Activated CD8-positive, alpha-beta T cell treated with anti-CD3 and anti-CD28 coated beads for 36 hours (primary cell): ENCODE measurements at regions of chr18 and their contacts with region 1.

Region 1: DNA sequence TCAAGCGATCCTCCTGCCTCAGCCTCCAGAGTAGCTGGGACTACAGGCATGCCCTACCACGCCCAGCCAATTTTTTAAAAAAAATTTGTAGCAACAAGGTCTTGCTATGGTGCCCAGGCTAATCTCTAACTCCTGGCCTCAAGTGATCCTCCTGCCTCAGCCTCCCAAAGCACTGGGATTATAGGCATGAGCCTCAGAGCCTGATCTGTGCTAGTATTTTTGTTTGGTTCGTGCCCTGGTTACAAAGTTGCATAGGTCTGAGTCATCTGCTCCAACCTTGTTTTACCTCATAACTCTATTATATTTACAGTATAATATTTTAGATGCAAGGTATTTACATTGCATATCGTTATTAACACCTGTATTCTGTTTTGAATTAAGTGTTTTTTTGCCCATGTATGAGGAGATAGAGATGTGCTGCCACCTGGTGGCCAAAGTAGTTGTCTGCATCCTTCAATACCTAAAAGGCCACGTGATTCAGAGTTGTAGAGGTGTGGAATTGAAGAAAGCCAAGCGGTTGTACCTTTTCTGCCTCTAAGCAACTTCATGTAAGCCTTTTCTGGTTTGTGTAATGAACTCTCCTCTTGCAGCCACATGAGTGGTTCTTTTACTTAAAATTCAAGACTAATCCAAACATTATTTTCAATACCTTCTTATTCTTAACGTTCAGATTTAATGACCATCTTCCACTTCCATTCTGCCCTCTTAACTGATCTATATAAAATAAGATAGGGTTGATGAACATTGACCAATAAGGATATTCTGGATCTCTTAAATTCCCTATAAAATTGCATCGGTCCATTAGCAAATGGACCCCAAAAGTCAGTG is 19.9 kb upstream of the CABYR start:
- DNase-seq: peak; percentile 90
- ATAC-seq: peak; percentile 80
- H3K4me3 Mint-ChIP-seq: no peak overlapping the region
- H3K27ac Mint-ChIP-seq: no peak overlapping the region
- H3K4me1 Mint-ChIP-seq: peaks cover 24% of the 10 kb centered on the region
- H3K27me3 Mint-ChIP-seq: no peaks in the 10 kb centered on the region
- CTCF ChIP-seq: peak; percentile 95

Region 2: DNA sequence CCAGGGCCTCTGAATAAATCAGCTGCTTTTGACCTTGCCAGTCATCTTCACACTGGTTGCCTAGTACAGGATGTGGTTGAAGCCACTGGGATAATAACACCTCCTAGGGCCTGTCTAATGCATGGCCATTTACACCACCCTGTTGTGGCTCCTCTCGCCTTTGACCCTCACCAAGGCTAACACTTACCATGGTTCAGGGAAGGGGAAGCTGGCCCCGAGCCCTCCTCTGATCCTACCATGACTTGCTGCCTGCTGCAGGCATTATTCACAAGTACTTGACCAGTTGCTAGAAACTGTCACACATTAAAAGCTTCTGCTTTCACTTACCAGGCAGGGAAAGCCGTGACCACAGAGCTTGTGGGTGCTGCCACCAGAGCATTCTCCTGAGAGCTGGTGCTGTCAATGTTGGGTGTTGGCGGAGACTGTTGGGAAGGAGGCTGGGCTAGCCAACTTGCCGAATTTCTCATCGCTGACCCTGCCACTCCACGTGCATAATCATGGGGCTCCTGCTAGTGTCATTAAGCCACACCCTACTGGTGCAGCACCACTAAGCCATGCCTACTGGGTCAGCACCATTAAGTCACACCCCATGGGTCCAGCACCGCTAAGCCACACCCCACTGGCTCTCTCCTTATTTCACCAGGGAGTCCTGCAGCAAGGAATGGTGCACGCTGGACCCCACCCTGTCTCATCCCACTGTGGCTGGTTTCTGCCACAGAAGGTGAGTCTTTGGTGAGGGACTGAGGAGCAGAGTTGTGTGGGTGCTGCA is 151.5 kb before region 1 on chr18:
- CTCF ChIA-PET with region 1: interaction called, 5 read pairs
- POLR2A ChIA-PET with region 1: no interaction called
- intact Hi-C with region 1: loop called (anchors 2 kb)
- DNase-seq: peak; percentile 59
- ATAC-seq: peak; percentile 41
- H3K4me3 Mint-ChIP-seq: no peak overlapping the region
- H3K27ac Mint-ChIP-seq: peak overlapping the region; percentile 14
- H3K4me1 Mint-ChIP-seq: peaks cover 74% of the 10 kb centered on the region
- H3K27me3 Mint-ChIP-seq: no peaks in the 10 kb centered on the region
- CTCF ChIP-seq: no peak

Region 3: DNA sequence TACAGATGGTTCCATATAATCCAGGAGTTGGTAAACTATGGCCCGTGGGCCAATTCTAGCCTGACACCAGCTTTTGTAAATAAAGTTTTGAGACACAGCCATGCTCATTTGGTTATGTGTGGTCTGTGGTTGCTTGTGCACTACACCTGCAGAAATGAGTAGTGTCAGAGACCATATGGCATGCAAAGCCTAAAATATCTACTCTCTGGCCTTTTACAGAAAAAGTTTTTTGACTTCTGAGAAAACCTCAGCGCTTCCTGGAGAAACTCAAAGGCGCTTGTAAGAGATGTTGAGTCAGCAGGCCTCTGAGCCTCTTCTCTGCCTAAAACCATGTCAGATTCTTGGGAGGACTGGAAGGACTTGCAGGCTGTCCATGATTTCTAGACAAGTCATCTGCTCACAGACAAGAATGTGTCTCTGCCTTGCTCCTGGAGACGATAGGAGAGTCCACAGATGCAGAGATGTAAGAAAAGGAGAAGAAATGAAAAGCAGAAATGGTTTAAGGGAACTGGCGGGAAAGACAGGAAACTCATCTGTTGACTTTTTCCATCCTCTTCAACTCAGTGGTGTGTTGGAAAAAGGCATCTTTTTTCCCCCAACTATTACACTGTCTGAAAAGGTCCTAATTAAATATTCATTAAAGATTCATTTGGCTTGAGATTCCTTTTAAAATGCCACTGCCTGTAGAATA is 99.2 kb before region 1 on chr18:
- CTCF ChIA-PET with region 1: interaction called, 5 read pairs
- POLR2A ChIA-PET with region 1: interaction called, 3 read pairs
- intact Hi-C with region 1: loop called (anchors 2 kb)
- DNase-seq: peak; percentile 83
- ATAC-seq: peak; percentile 68
- H3K4me3 Mint-ChIP-seq: peak overlapping the region; percentile 65
- H3K27ac Mint-ChIP-seq: peak overlapping the region; percentile 97
- H3K4me1 Mint-ChIP-seq: peaks cover 84% of the 10 kb centered on the region
- H3K27me3 Mint-ChIP-seq: no peaks in the 10 kb centered on the region
- CTCF ChIP-seq: no peak

Region 4: DNA sequence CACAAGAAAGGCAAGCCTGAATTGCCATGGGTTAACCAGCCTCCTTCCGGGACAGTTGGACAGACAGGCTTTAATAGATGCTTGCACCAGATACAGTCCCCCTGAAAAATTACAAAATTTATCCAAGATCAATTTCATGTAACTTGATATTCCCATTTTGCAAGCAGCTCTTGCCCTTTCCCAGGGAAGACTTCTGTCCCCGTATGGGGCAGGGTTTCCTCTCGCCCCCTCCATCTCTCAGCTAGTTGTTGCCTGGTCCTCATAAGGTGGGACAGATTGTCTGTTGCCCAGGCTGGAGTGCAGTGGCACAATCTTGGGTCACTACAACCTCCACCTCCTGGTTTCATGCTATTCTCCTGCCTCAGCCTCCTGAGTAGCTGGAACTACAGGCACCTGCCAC is 43.2 kb before region 1 on chr18:
- CTCF ChIA-PET with region 1: interaction called, 7 read pairs
- POLR2A ChIA-PET with region 1: no interaction called
- intact Hi-C with region 1: loop called (anchors 5 kb)
- DNase-seq: no peak
- ATAC-seq: peak; percentile 18
- H3K4me3 Mint-ChIP-seq: no peak overlapping the region
- H3K27ac Mint-ChIP-seq: peak overlapping the region; percentile 83
- H3K4me1 Mint-ChIP-seq: peaks cover 40% of the 10 kb centered on the region
- H3K27me3 Mint-ChIP-seq: no peaks in the 10 kb centered on the region
- CTCF ChIP-seq: no peak